SK-N-SH (cell line): ENCODE measurements at regions of chr1 and their contacts with region 1.

Region 1: GRCh38 chr1:3518256-3518655 is 63.8 kb downstream of the ARHGEF16 start:
- DNase-seq: no peak
- H3K4me3 ChIP-seq: no peak overlapping the region; a peak in 1 of 4 replicates
- H3K27ac ChIP-seq: peak overlapping the region in 1 of 2 experiments; percentile 93; a peak in 2 of 4 replicates
- H3K4me1 ChIP-seq: peaks cover 0 to 56% of the 10 kb centered on the region in 2 experiments; a peak in 1 of 4 replicates
- H3K27me3 ChIP-seq: no peaks in the 10 kb centered on the region
- CTCF ChIP-seq: peak; percentile 59
- EP300 ChIP-seq: no peak
- RAD21 ChIP-seq: no peak

Region 2: GRCh38 chr1:3213725-3214124 is 304.5 kb before region 1 on chr1:
- CTCF ChIA-PET with region 1: no interaction called
- POLR2A ChIA-PET with region 1: no interaction called
- DNase-seq: no peak
- H3K4me3 ChIP-seq: no peak overlapping the region
- H3K27ac ChIP-seq: no peak overlapping the region
- H3K4me1 ChIP-seq: no peaks in the 10 kb centered on the region; a peak in 1 of 4 replicates
- H3K27me3 ChIP-seq: no peaks in the 10 kb centered on the region; the same call in 1 of the 2 replicates
- CTCF ChIP-seq: no peak
- EP300 ChIP-seq: no peak
- RAD21 ChIP-seq: no peak

Region 3: GRCh38 chr1:3501856-3502665 is 16.2 kb before region 1 on chr1:
- CTCF ChIA-PET with region 1: interaction called, 18 read pairs
- POLR2A ChIA-PET with region 1: interaction called, 3 read pairs
- DNase-seq: peak; percentile 75
- H3K4me3 ChIP-seq: no peak overlapping the region
- H3K27ac ChIP-seq: peak overlapping the region in 1 of 2 experiments; percentile 68; a peak in 1 of 4 replicates
- H3K4me1 ChIP-seq: peaks cover 5 to 35% of the 10 kb centered on the region in 2 experiments; a peak in 2 of 4 replicates
- H3K27me3 ChIP-seq: no peaks in the 10 kb centered on the region
- CTCF ChIP-seq: no peak
- EP300 ChIP-seq: no peak
- RAD21 ChIP-seq: no peak

Region 4: DNA sequence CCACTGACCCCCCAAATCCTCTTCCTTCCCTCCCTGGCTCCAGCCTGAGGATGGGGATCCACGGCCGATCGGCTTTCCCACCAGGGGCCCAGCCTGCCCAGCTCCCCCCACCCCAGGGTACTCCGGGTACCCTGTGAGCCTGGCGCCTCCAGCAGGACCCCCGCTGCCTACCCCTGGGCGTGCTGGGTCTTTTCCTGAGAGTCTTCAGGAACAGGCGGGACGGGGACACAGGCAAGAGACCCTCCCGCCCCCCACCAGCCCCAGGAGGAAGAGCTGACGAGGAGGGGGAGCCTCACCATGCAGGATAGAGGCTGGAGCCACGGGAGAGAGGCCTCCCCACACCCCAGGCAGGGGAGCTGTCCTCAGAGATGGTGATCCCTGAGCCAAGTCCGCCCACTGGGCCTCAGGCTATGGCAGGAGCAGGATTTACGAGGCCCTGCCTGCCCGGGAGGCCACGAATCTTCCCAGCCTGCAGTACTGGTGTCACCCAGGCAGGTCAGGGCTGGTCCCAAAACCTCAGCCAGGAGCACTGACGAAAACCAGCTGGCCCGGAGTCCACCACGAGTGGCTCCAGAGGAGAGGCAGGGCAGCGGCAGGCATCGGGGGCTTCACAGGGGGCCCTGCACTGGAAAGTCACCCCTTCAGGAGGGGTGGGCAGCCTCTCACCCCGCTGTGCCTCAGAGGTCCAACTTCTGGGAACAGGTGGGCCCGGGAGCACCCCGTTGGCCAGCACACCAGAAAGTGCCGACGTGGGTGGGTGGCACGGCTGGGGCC is 35.1 kb after region 1 on chr1:
- CTCF ChIA-PET with region 1: interaction called, 11 read pairs
- POLR2A ChIA-PET with region 1: no interaction called
- DNase-seq: peak; percentile 76
- H3K4me3 ChIP-seq: no peak overlapping the region
- H3K27ac ChIP-seq: no peak overlapping the region; a peak in 1 of 4 replicates
- H3K4me1 ChIP-seq: peaks cover 0 to 58% of the 10 kb centered on the region in 2 experiments; a peak in 1 of 4 replicates
- H3K27me3 ChIP-seq: no peaks in the 10 kb centered on the region
- CTCF ChIP-seq: no peak
- EP300 ChIP-seq: no peak
- RAD21 ChIP-seq: no peak